ENCODE measurements at regions of chr6 and their contacts with region 1.

Region 1: GRCh38 chr6:150417899-150418826 is 49.4 kb downstream of the IYD start:
- DNase-seq: peak in 4 of 9 experiments; percentile 15 to 77 (median 48)
- ATAC-seq: peak; percentile 65
- H3K4me3 ChIP-seq: peak overlapping the region; percentile 34 to 45
- H3K4me3 Mint-ChIP-seq: peak overlapping the region; percentile 79
- H3K27ac ChIP-seq: no peak overlapping the region
- H3K27ac Mint-ChIP-seq: peak overlapping the region; percentile 16
- H3K4me1 ChIP-seq: peaks cover 5% of the 10 kb centered on the region
- H3K4me1 Mint-ChIP-seq: peaks cover 9% of the 10 kb centered on the region
- H3K27me3 ChIP-seq: no peaks in the 10 kb centered on the region
- H3K27me3 Mint-ChIP-seq: peaks cover 29% of the 10 kb centered on the region
- CTCF ChIP-seq: peak; percentile 71

Region 2: DNA sequence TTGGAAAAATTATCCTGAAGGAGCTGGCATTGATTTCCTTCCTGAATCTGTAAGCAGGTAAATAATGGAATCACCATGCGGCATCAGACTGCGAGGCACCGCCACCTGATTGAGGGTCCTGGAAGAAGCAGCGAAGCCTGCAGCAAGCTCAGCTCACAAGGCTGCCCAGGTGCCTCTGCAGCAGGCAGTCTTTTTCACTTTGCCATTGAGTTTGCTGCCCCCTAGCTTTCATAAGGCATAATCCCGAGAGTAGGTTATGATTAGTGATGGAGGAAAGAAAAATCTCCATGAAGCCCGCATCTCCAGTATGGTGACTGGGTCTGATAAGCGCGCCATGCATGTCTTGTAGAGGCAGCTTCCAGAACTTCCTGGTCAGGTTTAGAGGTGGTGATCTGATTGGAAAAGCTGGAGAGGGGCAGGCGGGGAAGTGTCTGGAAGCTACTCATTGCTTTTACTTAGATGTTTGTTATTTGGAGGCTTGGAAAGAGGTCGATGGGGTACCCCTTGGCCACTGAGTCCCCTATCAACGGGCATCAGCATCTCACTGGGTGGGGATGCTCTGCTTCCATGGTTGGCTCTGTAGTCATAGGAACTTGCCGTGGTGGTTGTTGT is 22.7 kb before region 1 on chr6:
- CTCF ChIA-PET with region 1: interaction called, 23 read pairs
- POLR2A ChIA-PET with region 1: no interaction called
- intact Hi-C with region 1: no loop called
- DNase-seq: peak in 4 of 9 experiments; percentile 17 to 65 (median 39)
- ATAC-seq: peak; percentile 34
- H3K4me3 ChIP-seq: no peak overlapping the region
- H3K4me3 Mint-ChIP-seq: no peak overlapping the region
- H3K27ac ChIP-seq: no peak overlapping the region
- H3K27ac Mint-ChIP-seq: no peak overlapping the region
- H3K4me1 ChIP-seq: no peaks in the 10 kb centered on the region
- H3K4me1 Mint-ChIP-seq: no peaks in the 10 kb centered on the region
- H3K27me3 ChIP-seq: peaks cover 0 to 2% of the 10 kb centered on the region in 2 experiments
- H3K27me3 Mint-ChIP-seq: peaks cover 12% of the 10 kb centered on the region
- CTCF ChIP-seq: peak; percentile 51

Region 3: DNA sequence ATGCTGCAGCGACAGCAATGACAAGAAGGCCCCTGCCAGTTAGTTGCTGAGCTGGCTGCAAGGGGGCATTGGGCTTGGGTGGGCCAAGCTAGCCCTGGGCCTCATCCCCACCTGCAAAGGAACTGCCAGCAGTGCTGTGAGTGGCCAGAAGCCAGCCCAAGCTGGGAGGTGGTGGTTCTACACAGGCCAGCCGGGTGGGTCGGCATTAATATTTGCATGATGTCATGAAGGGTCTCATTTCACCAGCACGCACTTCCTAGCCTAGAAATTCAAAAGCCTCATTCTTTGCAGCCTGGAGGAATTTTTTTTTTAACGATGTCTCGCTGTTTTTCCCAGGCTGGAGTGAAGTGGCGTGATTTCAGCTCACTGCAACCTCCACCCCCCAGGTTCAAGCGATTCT is 12.7 kb after region 1 on chr6:
- CTCF ChIA-PET with region 1: interaction called, 40 read pairs
- POLR2A ChIA-PET with region 1: no interaction called
- intact Hi-C with region 1: no loop called
- DNase-seq: no peak
- ATAC-seq: no peak
- H3K4me3 ChIP-seq: no peak overlapping the region
- H3K4me3 Mint-ChIP-seq: no peak overlapping the region
- H3K27ac ChIP-seq: no peak overlapping the region
- H3K27ac Mint-ChIP-seq: no peak overlapping the region
- H3K4me1 ChIP-seq: no peaks in the 10 kb centered on the region
- H3K4me1 Mint-ChIP-seq: no peaks in the 10 kb centered on the region
- H3K27me3 ChIP-seq: no peaks in the 10 kb centered on the region
- H3K27me3 Mint-ChIP-seq: peaks cover 4% of the 10 kb centered on the region
- CTCF ChIP-seq: no peak

Region 4: GRCh38 chr6:150600301-150601017 is 182.3 kb after region 1 on chr6:
- CTCF ChIA-PET with region 1: interaction called, 6 read pairs
- POLR2A ChIA-PET with region 1: no interaction called
- intact Hi-C with region 1: loop called (anchors 1 to 5 kb)
- DNase-seq: peak; percentile 1 to 85 (median 53)
- ATAC-seq: peak; percentile 69
- H3K4me3 ChIP-seq: peak overlapping the region; percentile 55 to 64
- H3K4me3 Mint-ChIP-seq: peak overlapping the region; percentile 90
- H3K27ac ChIP-seq: peak overlapping the region in 1 of 2 experiments; percentile 37
- H3K27ac Mint-ChIP-seq: peak overlapping the region; percentile 87
- H3K4me1 ChIP-seq: peaks cover 4% of the 10 kb centered on the region
- H3K4me1 Mint-ChIP-seq: peaks cover 15% of the 10 kb centered on the region
- H3K27me3 ChIP-seq: peaks cover 0 to 15% of the 10 kb centered on the region in 2 experiments
- H3K27me3 Mint-ChIP-seq: peaks cover 27% of the 10 kb centered on the region
- CTCF ChIP-seq: peak; percentile 34

Region 5: GRCh38 chr6:150741633-150742504 is 323.7 kb after region 1 on chr6:
- CTCF ChIA-PET with region 1: interaction called, 7 read pairs
- POLR2A ChIA-PET with region 1: no interaction called
- intact Hi-C with region 1: loop called (anchors 1 to 2 kb)
- DNase-seq: peak in 2 of 9 experiments; percentile 26 to 28
- ATAC-seq: no peak
- H3K4me3 ChIP-seq: no peak overlapping the region
- H3K4me3 Mint-ChIP-seq: no peak overlapping the region
- H3K27ac ChIP-seq: no peak overlapping the region
- H3K27ac Mint-ChIP-seq: no peak overlapping the region
- H3K4me1 ChIP-seq: no peaks in the 10 kb centered on the region
- H3K4me1 Mint-ChIP-seq: no peaks in the 10 kb centered on the region
- H3K27me3 ChIP-seq: no peaks in the 10 kb centered on the region
- H3K27me3 Mint-ChIP-seq: no peaks in the 10 kb centered on the region
- CTCF ChIP-seq: peak; percentile 14

Region 6: GRCh38 chr6:150813319-150813992 is 395.3 kb after region 1 on chr6:
- CTCF ChIA-PET with region 1: interaction called, 164 read pairs
- POLR2A ChIA-PET with region 1: no interaction called
- intact Hi-C with region 1: loop called (anchors 1 kb)
- DNase-seq: peak in 4 of 9 experiments; percentile 8 to 64 (median 38)
- ATAC-seq: peak; percentile 46
- H3K4me3 ChIP-seq: no peak overlapping the region
- H3K4me3 Mint-ChIP-seq: no peak overlapping the region
- H3K27ac ChIP-seq: peak overlapping the region in 1 of 2 experiments; percentile 19
- H3K27ac Mint-ChIP-seq: no peak overlapping the region
- H3K4me1 ChIP-seq: no peaks in the 10 kb centered on the region
- H3K4me1 Mint-ChIP-seq: peaks cover 4% of the 10 kb centered on the region
- H3K27me3 ChIP-seq: no peaks in the 10 kb centered on the region
- H3K27me3 Mint-ChIP-seq: peaks cover 7% of the 10 kb centered on the region
- CTCF ChIP-seq: no peak